Colonic mucosa (tissue), 4 donors: ENCODE measurements at regions of chr12 and their contacts with region 1.

Region 1: DNA sequence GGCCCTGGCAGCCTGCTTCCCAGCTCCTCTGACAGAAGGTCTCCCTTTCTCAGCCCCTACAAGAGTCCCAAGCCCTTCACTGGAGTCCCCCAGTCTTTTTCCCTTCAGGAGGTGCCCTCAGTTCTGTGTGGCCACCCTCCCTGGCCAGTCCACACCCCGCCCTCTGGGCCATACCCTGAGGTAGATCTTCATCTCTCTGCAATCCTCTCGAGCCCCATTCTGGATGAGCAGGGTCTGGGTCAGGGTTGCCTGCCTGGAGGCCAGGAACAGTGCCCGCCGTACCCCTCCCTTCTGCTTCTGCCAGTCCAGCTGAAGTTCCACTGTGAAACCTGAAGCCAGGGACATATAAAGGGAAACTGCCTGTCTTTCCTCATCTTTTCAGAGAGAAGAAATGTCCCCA is 15.6 kb downstream of the ITGA5 start:
- DNase-seq: no peak
- H3K4me3 ChIP-seq: no peak overlapping the region
- H3K27ac ChIP-seq: no peak overlapping the region
- H3K4me1 ChIP-seq: no peaks in the 10 kb centered on the region
- H3K27me3 ChIP-seq: no peaks in the 10 kb centered on the region
- CTCF ChIP-seq: no peak

Region 2: GRCh38 chr12:54352022-54352531 is 51.4 kb before region 1 on chr12:
- intact Hi-C with region 1: no loop called
- DNase-seq: no peak
- H3K4me3 ChIP-seq: no peak overlapping the region
- H3K27ac ChIP-seq: no peak overlapping the region
- H3K4me1 ChIP-seq: no peaks in the 10 kb centered on the region
- H3K27me3 ChIP-seq: no peaks in the 10 kb centered on the region
- CTCF ChIP-seq: no peak

Region 3: DNA sequence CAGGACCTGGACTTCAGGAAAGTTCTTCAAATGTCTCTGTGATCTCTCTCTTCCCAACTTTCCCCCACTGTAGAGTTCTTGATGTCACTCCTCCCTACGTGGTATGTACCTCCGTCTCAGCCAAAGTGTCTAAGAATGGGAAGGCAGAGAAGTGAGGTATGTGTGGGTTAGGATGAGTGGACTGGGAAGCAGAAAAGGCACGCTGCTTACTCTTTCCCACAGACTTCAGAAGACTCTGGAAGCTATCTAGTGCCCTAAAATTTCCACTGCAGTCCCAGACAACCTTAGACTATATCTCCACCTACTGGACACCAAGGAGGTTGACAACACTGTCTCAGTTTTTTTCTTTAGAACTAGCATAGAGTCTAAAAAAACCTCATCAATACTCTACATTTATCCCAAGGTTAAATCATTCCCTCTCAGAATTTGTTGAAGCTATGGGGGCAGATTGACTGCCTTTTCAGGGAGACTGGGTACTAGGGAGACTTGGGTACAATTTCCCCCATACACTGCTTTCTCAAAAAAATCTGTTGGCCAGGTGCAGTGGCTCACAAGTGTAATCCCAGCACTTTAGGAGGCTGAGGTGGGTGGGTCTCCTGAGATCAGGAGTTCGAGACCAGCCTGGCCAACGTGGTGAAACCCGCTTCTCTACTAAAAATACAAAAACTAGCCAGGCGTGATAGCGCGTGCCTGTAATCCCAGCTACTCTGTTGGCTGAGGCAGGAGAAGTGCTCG is 36.2 kb after region 1 on chr12:
- intact Hi-C with region 1: loop called (anchors 2 kb)
- DNase-seq: no peak
- H3K4me3 ChIP-seq: no peak overlapping the region
- H3K27ac ChIP-seq: no peak overlapping the region
- H3K4me1 ChIP-seq: no peaks in the 10 kb centered on the region
- H3K27me3 ChIP-seq: no peaks in the 10 kb centered on the region
- CTCF ChIP-seq: peak; percentile 59